HepG2 (cell line): ENCODE measurements at regions of chr6 and their contacts with region 1.

Region 1: GRCh38 chr6:151482290-151482689 is 11.5 kb upstream of the CCDC170 start:
- DNase-seq: no peak
- ATAC-seq: no peak
- H3K4me3 ChIP-seq: no peak overlapping the region
- H3K27ac ChIP-seq: no peak overlapping the region
- H3K4me1 ChIP-seq: peaks cover 24% of the 10 kb centered on the region
- H3K27me3 ChIP-seq: no peaks in the 10 kb centered on the region
- CTCF ChIP-seq: no peak
- EP300 ChIP-seq: no peak
- POLR2A ChIP-seq: no peak
- RAD21 ChIP-seq: no peak

Region 2: DNA sequence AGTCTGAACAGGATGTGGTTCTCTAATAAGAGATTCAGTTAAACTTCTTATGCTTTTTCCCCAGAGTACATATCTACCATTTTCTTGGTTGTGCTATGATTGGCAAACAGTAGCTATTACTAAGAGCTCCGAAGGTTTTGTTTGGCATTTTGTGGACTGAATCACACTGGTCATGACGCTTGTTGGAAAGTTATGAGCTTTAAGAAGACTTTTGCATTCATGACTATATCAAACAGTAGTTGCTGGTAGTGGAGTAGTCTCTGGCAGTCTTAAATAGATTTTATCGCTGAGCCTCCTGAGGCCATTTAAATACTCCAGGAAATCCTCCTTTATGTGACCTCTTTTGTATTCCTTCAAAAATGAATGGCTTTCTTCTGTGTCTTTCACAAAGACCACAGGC is 52.3 kb after region 1 on chr6:
- CTCF ChIA-PET with region 1: no interaction called
- POLR2A ChIA-PET with region 1: no interaction called
- in situ Hi-C with region 1: no loop called
- intact Hi-C with region 1: loop called (anchors 1 kb)
- DNase-seq: no peak
- ATAC-seq: no peak
- H3K4me3 ChIP-seq: no peak overlapping the region
- H3K27ac ChIP-seq: no peak overlapping the region
- H3K4me1 ChIP-seq: peaks cover 11% of the 10 kb centered on the region; the same call in 1 of the 2 replicates
- H3K27me3 ChIP-seq: no peaks in the 10 kb centered on the region
- CTCF ChIP-seq: no peak
- EP300 ChIP-seq: no peak
- POLR2A ChIP-seq: no peak
- RAD21 ChIP-seq: no peak